Prostate gland (tissue), 2 donors: ENCODE measurements at regions of chr3 and their contacts with region 1.

Region 1: DNA sequence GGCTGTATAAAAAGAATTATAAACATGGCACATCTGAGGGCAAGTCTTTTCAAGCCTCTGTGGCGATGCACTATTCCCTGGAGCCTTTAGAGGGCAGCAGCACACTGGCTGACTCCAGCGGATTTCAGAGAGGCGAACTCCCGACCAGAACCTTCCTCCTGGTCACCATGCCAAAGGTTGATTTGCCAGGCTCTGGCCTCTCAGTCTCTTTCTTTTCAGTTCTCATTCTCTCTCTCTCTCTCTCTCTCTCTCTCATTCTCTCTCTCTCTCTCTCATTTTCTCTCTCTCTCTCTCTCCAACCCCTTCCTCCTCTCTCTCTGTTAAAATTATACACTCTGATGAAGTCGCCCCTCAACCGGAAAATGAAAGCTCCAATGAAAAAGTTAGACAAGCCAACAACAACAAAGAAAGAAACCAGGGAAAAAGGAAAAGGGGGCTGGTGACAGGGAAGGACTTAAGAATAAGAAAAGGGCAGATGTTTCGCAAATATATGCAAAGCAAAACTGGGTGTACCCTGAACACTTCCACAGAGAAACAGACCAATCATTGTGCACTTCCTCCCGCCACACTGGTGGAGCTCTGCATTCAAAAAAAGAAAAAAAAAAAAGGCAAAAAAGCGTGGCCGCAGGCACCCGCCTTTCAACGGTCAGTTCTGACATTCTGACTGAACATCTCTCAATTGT is 90.2 kb downstream of the TIGIT start:
- DNase-seq: peak; percentile 83
- H3K4me3 ChIP-seq: peak overlapping the region; percentile 25
- H3K27ac ChIP-seq: peak overlapping the region; percentile 72 to 78
- H3K4me1 ChIP-seq: no peaks in the 10 kb centered on the region
- H3K27me3 ChIP-seq: no peaks in the 10 kb centered on the region
- CTCF ChIP-seq: peak; percentile 75 to 94 (median 86)
- POLR2A ChIP-seq: no peak

Region 2: GRCh38 chr3:114152519-114153151 is 231.4 kb before region 1 on chr3:
- intact Hi-C with region 1: loop called (anchors 10 kb)
- DNase-seq: peak; percentile 53
- H3K4me3 ChIP-seq: peak overlapping the region; percentile 37 to 38
- H3K27ac ChIP-seq: peak overlapping the region in 1 of 2 donors; percentile 3
- H3K4me1 ChIP-seq: no peaks in the 10 kb centered on the region
- H3K27me3 ChIP-seq: no peaks in the 10 kb centered on the region
- CTCF ChIP-seq: peak; percentile 45 to 86 (median 78)
- POLR2A ChIP-seq: no peak

Region 3: GRCh38 chr3:114447545-114447944 is 63.5 kb after region 1 on chr3:
- intact Hi-C with region 1: loop called (anchors 10 kb)
- DNase-seq: no peak
- H3K4me3 ChIP-seq: no peak overlapping the region
- H3K27ac ChIP-seq: peak overlapping the region; percentile 1 to 18
- H3K4me1 ChIP-seq: no peaks in the 10 kb centered on the region
- H3K27me3 ChIP-seq: no peaks in the 10 kb centered on the region
- CTCF ChIP-seq: peak in 1 of 4 experiments; percentile 9
- POLR2A ChIP-seq: no peak

Region 4: GRCh38 chr3:114476511-114476910 is 92.5 kb after region 1 on chr3:
- intact Hi-C with region 1: no loop called
- DNase-seq: no peak
- H3K4me3 ChIP-seq: no peak overlapping the region
- H3K27ac ChIP-seq: no peak overlapping the region
- H3K4me1 ChIP-seq: no peaks in the 10 kb centered on the region
- H3K27me3 ChIP-seq: no peaks in the 10 kb centered on the region
- CTCF ChIP-seq: no peak
- POLR2A ChIP-seq: no peak

Region 5: GRCh38 chr3:115092220-115092791 is 708.3 kb after region 1 on chr3:
- intact Hi-C with region 1: loop called (anchors 10 kb)
- DNase-seq: peak; percentile 62
- H3K4me3 ChIP-seq: no peak overlapping the region
- H3K27ac ChIP-seq: peak overlapping the region; percentile 10 to 29
- H3K4me1 ChIP-seq: peaks cover 4% of the 10 kb centered on the region
- H3K27me3 ChIP-seq: no peaks in the 10 kb centered on the region
- CTCF ChIP-seq: peak; percentile 24 to 75 (median 64)
- POLR2A ChIP-seq: no peak